ENCODE measurements at regions of chr4 and their contacts with region 1.

Region 1: GRCh38 chr4:6783053-6783981 is 790 bp downstream of the KIAA0232 start:
- DNase-seq: peak; percentile 94
- ATAC-seq: peak; percentile 82
- H3K4me3 Mint-ChIP-seq: peak overlapping the region; percentile 84
- H3K27ac Mint-ChIP-seq: peak overlapping the region; percentile 73
- H3K4me1 Mint-ChIP-seq: peaks cover 52% of the 10 kb centered on the region
- H3K27me3 Mint-ChIP-seq: no peaks in the 10 kb centered on the region

Region 2: DNA sequence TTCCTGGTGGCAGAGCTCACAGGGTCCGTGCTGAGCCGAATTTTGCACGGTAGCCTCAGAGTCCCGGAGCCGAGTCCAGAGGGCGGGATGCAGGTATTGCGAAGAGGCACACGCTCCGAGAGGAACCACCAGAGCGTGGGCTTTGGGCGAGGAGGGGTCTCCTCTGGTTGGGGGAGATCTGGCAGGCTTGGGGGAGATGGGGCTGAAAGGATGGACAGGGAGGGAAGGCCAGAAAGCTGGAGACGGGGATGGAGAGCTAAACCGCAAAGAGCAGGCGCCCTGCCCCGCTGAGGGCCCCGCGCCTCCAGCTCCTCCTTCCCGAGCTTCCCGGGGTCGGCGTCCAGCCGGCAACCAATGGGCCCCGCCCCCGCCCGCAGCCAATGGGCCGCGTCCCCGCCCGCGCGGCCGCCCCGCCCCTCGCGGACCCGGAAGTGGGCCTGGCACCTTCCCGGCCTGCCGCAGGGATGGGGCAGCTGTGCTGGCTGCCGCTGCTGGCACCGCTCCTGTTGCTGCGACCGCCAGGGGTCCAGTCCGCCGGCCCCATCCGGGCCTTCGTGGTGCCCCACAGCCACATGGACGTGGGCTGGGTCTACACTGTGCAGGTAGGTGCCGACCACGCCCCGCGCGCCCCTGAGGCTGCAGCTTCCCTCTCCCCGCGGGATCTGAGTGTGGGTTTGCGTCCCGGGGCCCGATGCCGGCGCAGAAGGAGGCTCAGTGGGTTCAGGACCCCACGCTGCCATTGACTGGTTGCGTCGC is 208.4 kb before region 1 on chr4 and contains the start of gene MAN2B2:
- CTCF ChIA-PET with region 1: no interaction called
- POLR2A ChIA-PET with region 1: no interaction called
- intact Hi-C with region 1: loop called in 1 of 2 experiments (anchors 1 kb)
- DNase-seq: peak; percentile 89
- ATAC-seq: peak; percentile 96
- H3K4me3 Mint-ChIP-seq: peak within 1 kb of the TSS; percentile 78
- H3K27ac Mint-ChIP-seq: peak within 1 kb of the TSS; percentile 74
- H3K4me1 Mint-ChIP-seq: peaks cover 6% of the 10 kb centered on the region
- H3K27me3 Mint-ChIP-seq: no peaks in the 10 kb centered on the region
- total RNA-seq, gene MAN2B2: 13.0 to 14.6 TPM

Region 3: GRCh38 chr4:6709230-6710114 is 73.8 kb before region 1 on chr4 and contains the start of gene MRFAP1L1:
- CTCF ChIA-PET with region 1: interaction called, 3 read pairs
- POLR2A ChIA-PET with region 1: interaction called, 4 read pairs
- intact Hi-C with region 1: loop called in 1 of 2 experiments (anchors 1 kb)
- DNase-seq: peak; percentile 98
- ATAC-seq: peak; percentile 73
- H3K4me3 Mint-ChIP-seq: peak within 1 kb of the TSS; percentile 98
- H3K27ac Mint-ChIP-seq: peak within 1 kb of the TSS; percentile 98
- H3K4me1 Mint-ChIP-seq: peaks cover 46% of the 10 kb centered on the region
- H3K27me3 Mint-ChIP-seq: no peaks in the 10 kb centered on the region
- total RNA-seq, gene MRFAP1L1: 36.4 to 45.0 TPM

Region 4: DNA sequence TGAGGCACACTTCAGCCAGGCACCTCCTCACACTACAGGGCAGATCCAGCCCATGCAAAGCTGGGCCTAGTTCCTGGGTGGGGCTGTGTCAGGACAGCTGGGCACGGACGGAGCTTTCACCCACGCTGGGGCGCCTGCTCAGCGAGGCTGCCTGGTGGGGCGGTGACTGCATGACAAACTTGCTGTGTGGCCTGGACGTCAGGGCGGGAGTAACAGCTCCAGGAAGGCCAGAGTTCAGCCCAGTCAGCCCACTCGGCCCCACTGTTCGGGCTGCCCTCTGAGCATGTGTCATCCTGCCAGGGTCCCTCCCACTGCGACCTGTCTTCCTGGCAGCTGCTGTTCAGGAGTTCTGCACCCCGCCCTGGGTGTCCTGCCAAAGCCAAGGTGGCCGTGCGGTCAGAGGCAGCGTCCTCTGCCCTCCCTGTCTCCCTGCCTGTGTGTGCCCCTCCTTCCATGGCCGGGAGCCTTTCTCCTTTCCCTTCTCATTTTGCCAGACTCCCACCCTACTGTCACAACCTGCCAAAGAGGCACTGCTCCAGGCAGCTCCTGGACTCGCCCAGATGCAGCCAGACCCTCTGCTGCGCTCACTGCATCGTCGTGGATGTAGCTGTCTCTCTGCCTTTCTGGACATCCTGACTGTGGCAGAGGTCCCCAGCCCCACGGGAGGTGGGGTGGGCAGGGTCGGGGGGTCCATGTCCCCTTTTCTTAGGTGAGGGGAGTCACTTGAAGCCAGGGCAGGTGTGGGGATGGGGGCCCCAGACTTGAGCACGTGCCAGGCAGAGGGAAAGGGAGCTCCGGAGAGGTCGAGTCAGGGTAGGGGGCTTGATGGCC is 33.8 kb before region 1 on chr4:
- CTCF ChIA-PET with region 1: no interaction called
- POLR2A ChIA-PET with region 1: no interaction called
- intact Hi-C with region 1: no loop called
- DNase-seq: no peak
- ATAC-seq: no peak
- H3K4me3 Mint-ChIP-seq: no peak overlapping the region
- H3K27ac Mint-ChIP-seq: no peak overlapping the region
- H3K4me1 Mint-ChIP-seq: peaks cover 10% of the 10 kb centered on the region
- H3K27me3 Mint-ChIP-seq: no peaks in the 10 kb centered on the region

Region 5: DNA sequence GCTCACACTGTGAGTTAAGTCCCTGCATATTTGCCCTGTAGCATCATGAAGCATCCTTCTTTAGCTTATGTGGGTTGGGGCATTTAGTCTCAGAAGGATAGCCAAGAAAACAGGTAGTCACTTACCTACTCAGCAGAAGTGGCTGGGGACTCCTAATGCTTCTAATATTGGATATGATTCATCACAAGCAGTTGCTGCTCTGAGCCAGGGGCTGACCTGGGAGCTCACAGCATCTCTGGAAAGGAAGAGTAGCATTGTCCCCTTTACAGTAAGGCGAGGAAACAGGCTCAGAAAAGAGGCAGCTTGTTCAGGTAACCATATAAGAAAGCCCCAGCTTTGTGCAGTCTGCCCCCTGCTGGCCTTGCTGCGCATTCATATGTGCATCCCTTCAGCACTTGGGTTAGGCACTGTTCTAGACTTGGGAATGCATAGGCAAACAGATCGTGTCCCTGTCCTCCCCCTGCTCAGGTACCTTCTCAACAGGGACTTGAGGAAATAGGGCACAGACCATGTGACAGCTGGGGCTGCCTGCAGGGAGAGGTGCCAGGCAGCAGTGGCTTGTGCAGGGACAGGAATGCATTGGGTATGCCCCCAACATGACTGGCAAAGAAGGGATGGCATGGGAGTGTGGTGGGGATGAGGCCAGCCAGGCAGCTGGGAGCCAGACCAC is 90.6 kb after region 1 on chr4:
- CTCF ChIA-PET with region 1: interaction called, 17 read pairs
- POLR2A ChIA-PET with region 1: no interaction called
- intact Hi-C with region 1: loop called (anchors 2 to 5 kb)
- DNase-seq: peak; percentile 90
- ATAC-seq: peak; percentile 94
- H3K4me3 Mint-ChIP-seq: no peak overlapping the region
- H3K27ac Mint-ChIP-seq: no peak overlapping the region
- H3K4me1 Mint-ChIP-seq: no peaks in the 10 kb centered on the region
- H3K27me3 Mint-ChIP-seq: no peaks in the 10 kb centered on the region

Region 6: DNA sequence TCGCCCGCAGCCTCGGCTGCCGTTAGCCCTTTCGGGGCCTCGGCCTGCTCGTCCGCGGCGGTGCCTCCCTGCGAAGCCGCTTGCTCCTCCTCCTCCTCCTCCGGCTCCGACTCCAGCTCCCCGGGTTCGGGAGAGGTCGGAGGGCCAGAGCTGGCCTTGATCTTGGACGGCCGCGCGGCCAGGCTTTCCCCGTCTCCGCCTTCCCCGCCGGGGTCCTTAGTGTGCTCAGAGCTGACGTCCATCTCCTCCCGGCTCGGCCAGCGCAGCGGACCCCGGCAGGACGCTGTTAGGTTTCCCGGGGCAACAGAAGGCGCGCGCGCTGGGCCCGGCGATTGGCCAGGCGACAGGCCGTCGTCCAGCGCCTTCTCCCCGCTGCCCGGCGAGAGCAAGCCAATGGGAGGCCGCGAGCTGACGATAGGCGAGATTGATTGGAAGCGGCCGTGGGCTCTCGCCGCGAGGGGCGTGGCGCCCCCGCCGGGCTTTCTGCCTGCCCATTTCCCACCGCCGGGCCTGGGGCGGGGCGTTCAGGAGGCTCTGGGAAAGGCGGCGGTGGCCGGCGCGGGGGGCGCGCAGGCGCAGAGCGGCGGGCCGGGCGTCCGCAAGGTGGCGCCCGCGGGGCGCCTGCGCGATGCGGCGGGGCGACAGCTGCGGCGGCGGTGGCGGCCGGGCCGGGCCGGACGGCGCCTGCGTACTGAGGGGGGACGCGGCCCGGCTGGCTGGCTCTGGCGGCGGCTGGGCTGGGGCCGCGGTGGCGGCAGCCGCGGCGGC is 259.6 kb after region 1 on chr4 and contains the start of gene TADA2B:
- CTCF ChIA-PET with region 1: no interaction called
- POLR2A ChIA-PET with region 1: no interaction called
- intact Hi-C with region 1: loop called in 1 of 2 experiments (anchors 1 kb)
- DNase-seq: peak; percentile 95
- ATAC-seq: peak; percentile 87
- H3K4me3 Mint-ChIP-seq: peak within 1 kb of the TSS; percentile 86
- H3K27ac Mint-ChIP-seq: peak within 1 kb of the TSS; percentile 77
- H3K4me1 Mint-ChIP-seq: peaks cover 46% of the 10 kb centered on the region
- H3K27me3 Mint-ChIP-seq: peaks cover 3% of the 10 kb centered on the region
- total RNA-seq, gene TADA2B: 9.0 to 10.6 TPM

Region 7: GRCh38 chr4:8440492-8441341 is 1657.4 kb after region 1 on chr4 and contains the starts of genes ACOX3 and TRMT44:
- CTCF ChIA-PET with region 1: no interaction called
- POLR2A ChIA-PET with region 1: no interaction called
- intact Hi-C with region 1: loop called in 1 of 2 experiments (anchors 5 kb)
- DNase-seq: peak; percentile 95
- ATAC-seq: peak; percentile 89
- H3K4me3 Mint-ChIP-seq: peak within 1 kb of the TSS; percentile 93
- H3K27ac Mint-ChIP-seq: peak within 1 kb of the TSS; percentile 99
- H3K4me1 Mint-ChIP-seq: peaks cover 75% of the 10 kb centered on the region
- H3K27me3 Mint-ChIP-seq: no peaks in the 10 kb centered on the region
- total RNA-seq, gene ACOX3: 20.5 to 29.3 TPM
- total RNA-seq, gene TRMT44: 20.1 to 24.5 TPM

Measured in activated CD4-positive, alpha-beta T cell treated with anti-CD3 and anti-CD28 coated beads for 36 hours (primary cell).